Testis (tissue), 5 donors: ENCODE measurements at regions of chr6 and their contacts with region 1.

Region 1: GRCh38 chr6:26156076-26156849 is 69.0 kb downstream of the HFE start:
- DNase-seq: peak; percentile 95
- H3K4me3 ChIP-seq: peak overlapping the region; percentile 75
- H3K27ac ChIP-seq: peak overlapping the region; percentile 77 to 93
- H3K4me1 ChIP-seq: peaks cover 4% of the 10 kb centered on the region
- H3K27me3 ChIP-seq: no peaks in the 10 kb centered on the region
- CTCF ChIP-seq: no peak
- POLR2A ChIP-seq: peak; percentile 97

Region 2: DNA sequence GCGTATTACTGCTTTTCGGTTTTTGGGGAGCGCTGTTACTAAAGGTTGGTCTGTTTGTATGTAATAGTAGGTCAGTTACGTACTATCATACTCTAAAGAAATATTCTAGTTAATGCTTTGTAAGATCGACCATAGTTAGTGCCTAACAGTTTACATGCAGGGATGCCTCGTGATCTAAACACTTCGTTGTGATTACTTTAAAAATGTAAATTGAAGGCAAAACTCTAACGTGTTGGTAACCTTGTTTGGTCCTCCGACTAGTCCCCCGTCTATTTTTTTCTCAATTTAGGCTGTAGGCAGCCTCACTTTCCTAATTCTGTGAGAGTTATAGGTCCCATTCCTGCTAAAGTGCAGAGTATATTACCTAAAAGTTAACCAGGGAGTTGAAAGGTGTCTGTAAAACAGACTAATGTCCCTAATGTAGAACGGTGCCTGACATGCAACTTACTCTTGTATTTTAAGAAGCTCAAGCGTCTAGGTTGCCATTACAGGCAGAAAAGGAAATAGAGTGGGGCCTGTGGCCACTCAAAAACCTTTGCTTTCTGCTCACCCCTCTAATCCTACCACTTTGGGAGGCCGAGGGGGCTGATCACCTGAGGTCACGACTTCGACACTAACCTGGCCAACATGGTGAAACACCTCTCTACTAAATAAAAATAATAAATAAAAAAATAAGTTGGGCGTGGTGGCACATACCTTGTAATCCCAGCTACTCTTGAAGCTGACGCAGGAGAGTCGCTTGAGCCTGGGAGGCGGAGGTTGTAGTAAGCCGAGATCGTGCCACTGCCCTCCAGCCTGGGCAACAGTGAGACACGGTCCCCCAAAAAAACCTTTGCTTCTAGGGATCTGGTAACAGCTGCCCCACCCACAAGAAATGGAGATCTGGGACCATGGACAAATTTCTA is 31.2 kb before region 1 on chr6:
- intact Hi-C with region 1: loop called (anchors 1 kb)
- DNase-seq: no peak
- H3K4me3 ChIP-seq: peak overlapping the region; percentile 80 to 84
- H3K27ac ChIP-seq: peak overlapping the region; percentile 85 to 92
- H3K4me1 ChIP-seq: peaks cover 10% of the 10 kb centered on the region
- H3K27me3 ChIP-seq: no peaks in the 10 kb centered on the region
- CTCF ChIP-seq: no peak
- POLR2A ChIP-seq: no peak